ENCODE measurements at regions of chr7 and their contacts with region 1.

Region 1: DNA sequence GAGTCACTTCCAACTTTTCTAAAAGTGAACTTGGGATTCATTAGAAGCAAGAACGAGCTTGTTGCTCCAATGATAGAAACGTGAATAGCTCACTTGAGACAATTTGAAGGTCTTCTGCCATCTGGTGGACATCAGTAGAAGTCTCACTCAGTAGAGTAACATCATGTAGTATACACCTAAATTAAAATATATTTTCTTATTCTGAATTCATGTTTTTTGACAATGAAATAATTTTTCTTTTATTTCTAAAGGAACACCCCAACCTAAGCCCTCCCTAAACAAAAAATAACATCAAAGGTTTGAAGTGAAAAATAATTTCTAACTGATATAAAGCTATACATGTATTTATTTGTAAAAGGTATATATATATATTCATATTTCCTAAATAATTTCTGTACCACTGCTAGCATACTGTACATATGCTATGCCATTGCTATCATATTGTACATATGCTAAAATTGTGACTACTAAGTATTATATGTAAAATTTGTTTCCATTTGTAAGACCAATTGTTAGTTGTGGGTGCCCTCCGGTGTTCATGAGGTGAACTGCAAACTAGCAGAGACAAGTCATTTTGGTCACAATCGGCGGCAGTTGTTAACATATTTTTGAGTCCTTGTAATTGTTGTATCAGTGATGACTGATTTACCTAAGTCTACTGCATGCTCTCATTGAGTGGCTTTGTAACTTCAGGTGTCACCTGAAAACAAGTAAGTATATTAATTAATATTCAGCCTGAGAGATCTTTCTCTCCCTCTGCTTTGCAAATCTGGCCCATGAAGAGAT is 121.9 kb downstream of the PTPRZ1 start:
- DNase-seq: peak; percentile 85
- H3K4me3 ChIP-seq: no peak overlapping the region
- H3K27ac ChIP-seq: no peak overlapping the region
- H3K4me1 ChIP-seq: no peaks in the 10 kb centered on the region
- H3K27me3 ChIP-seq: no peaks in the 10 kb centered on the region
- CTCF ChIP-seq: peak; percentile 81

Region 2: DNA sequence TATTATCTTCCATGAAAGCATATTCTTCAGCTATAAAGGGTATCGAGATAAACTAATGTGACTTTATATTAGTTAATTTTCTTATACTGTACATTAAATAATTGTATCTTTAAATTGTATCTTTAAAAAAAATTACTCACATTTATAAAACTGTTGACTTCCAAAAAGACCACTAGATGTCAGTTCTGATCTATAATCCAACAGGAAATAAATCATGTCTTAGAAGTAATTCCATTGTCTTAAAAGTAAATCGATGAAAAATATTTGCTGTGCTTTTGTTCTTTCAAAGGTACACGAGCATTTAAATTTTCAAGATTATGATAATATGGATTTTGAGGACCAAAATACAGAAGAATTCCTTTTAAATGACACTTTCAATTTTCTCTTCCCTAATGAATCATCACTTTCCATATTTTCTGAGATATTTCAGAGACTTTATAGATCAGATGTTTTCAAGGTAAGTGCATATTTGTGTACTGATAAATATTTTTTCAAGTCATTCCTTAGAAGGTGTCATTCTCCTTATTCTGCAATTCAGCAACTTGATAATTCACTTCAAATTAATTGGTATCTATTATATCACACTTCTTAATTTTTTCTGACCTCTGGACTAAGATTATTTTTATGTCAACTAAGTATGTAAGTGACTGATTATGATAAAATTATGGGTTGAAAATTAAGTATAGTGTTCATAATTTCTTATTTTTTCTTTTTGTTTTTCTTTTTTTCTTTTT is 867.9 kb before region 1 on chr7:
- CTCF ChIA-PET with region 1: no interaction called
- POLR2A ChIA-PET with region 1: no interaction called
- intact Hi-C with region 1: loop called (anchors 5 kb)
- DNase-seq: peak; percentile 28
- H3K4me3 ChIP-seq: no peak overlapping the region
- H3K27ac ChIP-seq: no peak overlapping the region
- H3K4me1 ChIP-seq: peaks cover 10% of the 10 kb centered on the region
- H3K27me3 ChIP-seq: no peaks in the 10 kb centered on the region
- CTCF ChIP-seq: peak; percentile 57; the same call in 1 of the 2 replicates

Region 3: GRCh38 chr7:121366852-121367431 is 627.9 kb before region 1 on chr7:
- CTCF ChIA-PET with region 1: interaction called, 13 read pairs
- POLR2A ChIA-PET with region 1: no interaction called
- intact Hi-C with region 1: loop called (anchors 2 kb)
- DNase-seq: peak; percentile 49
- H3K4me3 ChIP-seq: no peak overlapping the region
- H3K27ac ChIP-seq: no peak overlapping the region
- H3K4me1 ChIP-seq: peaks cover 25% of the 10 kb centered on the region
- H3K27me3 ChIP-seq: no peaks in the 10 kb centered on the region
- CTCF ChIP-seq: peak; percentile 83

Region 4: DNA sequence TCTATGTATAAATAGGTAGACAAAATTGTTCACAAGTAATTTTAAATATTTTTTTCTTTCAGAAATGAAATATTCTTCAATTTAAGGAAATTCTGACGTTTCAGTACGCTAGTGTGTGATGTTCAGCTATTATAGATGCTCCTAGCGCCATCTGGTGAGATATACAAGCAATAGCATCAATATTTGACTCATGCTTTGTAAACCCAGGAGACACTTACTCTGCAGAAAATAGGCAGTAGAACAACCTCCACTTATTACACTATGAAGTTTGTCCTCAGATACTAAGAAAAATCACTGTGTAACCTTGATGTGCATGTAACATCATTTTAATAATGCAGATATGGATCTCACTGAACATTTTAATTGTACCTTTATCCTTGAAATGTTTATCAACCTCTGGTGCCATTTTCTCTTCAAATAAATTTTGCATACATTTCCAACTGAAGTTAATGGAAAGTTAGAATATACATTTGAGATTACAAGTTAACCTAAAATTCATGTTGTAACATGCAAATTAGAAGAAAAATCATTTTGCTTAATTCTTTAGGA is 447.2 kb before region 1 on chr7:
- CTCF ChIA-PET with region 1: no interaction called
- POLR2A ChIA-PET with region 1: no interaction called
- intact Hi-C with region 1: loop called (anchors 5 kb)
- DNase-seq: peak; percentile 72
- H3K4me3 ChIP-seq: no peak overlapping the region
- H3K27ac ChIP-seq: no peak overlapping the region
- H3K4me1 ChIP-seq: peaks cover 3% of the 10 kb centered on the region
- H3K27me3 ChIP-seq: no peaks in the 10 kb centered on the region
- CTCF ChIP-seq: peak; percentile 85

Region 5: DNA sequence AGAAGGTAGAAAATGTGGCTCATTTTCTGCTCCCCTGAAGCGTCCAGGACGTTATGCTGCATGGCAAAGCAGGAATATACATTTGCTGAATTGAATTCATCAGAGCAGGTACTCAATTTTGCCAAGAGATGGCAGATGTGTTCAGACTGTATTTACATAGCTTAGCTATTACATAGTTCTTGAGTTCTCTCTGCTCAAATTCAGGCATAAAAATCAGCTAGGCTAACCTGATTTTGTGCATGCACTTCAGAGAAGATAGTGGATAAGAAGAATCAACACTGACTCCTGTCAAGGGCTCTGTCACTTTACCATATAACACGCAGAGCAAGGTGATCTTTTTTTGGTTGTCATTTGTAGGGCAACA is 389.5 kb before region 1 on chr7:
- CTCF ChIA-PET with region 1: interaction called, 31 read pairs
- POLR2A ChIA-PET with region 1: no interaction called
- intact Hi-C with region 1: loop called (anchors 2 kb)
- DNase-seq: peak; percentile 71
- H3K4me3 ChIP-seq: no peak overlapping the region
- H3K27ac ChIP-seq: no peak overlapping the region
- H3K4me1 ChIP-seq: peaks cover 23% of the 10 kb centered on the region
- H3K27me3 ChIP-seq: no peaks in the 10 kb centered on the region
- CTCF ChIP-seq: peak; percentile 64

Region 6: GRCh38 chr7:121752706-121753105 is 242.1 kb before region 1 on chr7:
- CTCF ChIA-PET with region 1: interaction called, 7 read pairs
- POLR2A ChIA-PET with region 1: no interaction called
- intact Hi-C with region 1: loop called (anchors 1 kb)
- DNase-seq: peak; percentile 22
- H3K4me3 ChIP-seq: no peak overlapping the region
- H3K27ac ChIP-seq: no peak overlapping the region
- H3K4me1 ChIP-seq: no peaks in the 10 kb centered on the region
- H3K27me3 ChIP-seq: no peaks in the 10 kb centered on the region
- CTCF ChIP-seq: peak; percentile 62

Region 7: DNA sequence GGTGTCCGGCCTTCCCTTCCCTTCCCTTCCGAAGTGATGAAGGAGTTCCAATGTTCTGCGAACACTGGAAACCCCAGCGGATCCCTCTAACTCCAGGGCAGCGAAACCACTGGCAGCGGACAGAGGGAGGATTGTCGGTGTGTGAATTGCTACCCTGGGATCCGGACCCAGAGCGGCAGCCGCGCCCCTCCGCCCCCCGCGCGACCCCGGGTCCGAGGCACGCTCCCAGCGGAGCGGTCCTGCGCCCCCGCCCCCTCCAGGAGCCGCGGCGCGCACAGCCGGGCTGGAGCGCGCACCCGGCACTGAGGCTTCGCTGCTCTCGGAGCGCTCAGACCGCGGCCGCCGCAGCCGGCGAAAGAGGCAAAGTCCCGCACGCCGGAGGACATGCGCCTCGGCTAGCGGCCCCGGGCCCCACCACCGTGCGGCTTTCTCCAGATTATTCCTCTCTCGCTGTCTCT is 122.0 kb before region 1 on chr7 and contains the start of gene PTPRZ1:
- CTCF ChIA-PET with region 1: interaction called, 5 read pairs
- POLR2A ChIA-PET with region 1: no interaction called
- intact Hi-C with region 1: loop called (anchors 5 kb)
- DNase-seq: peak; percentile 48
- H3K4me3 ChIP-seq: peak within 1 kb of the TSS; percentile 53
- H3K27ac ChIP-seq: no peak within 1 kb of the TSS
- H3K4me1 ChIP-seq: no peaks in the 10 kb centered on the region
- H3K27me3 ChIP-seq: peaks cover 88% of the 10 kb centered on the region
- CTCF ChIP-seq: no peak
- total RNA-seq, gene PTPRZ1: 0.20 and 0.58 TPM in 2 replicates